ENCODE measurements at regions of chr12 and their contacts with region 1.

Region 1: DNA sequence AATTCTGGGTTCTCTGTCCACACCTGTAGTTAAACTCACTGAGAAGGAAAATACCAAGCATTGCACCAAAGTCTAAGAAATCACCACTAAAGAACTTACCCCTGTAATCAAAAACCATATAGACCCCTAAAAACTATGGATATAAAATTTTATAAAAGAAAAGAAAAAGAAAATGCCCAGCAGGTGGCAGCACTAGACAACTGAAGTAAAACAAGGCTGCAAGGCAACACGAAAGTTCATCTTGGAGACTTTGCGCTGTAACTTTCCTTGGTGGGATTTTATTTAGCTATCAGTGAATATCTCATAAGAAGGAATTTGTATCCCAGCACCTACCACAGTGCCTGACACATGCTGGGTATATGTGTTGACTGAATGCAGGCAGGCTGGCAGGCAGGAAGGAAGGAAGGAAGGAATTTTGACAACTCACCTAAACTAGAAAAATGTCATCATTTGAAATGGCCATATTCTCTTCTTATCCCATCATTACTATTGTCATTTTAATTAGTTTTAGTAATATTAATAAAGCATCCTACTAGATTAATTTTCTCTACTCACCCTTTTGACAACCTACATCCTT is 68.2 kb upstream of the ETV6 start:
- DNase-seq: peak; percentile 52
- H3K4me3 ChIP-seq: no peak overlapping the region
- H3K27ac ChIP-seq: no peak overlapping the region
- H3K4me1 ChIP-seq: peaks cover 24% of the 10 kb centered on the region
- H3K27me3 ChIP-seq: no peaks in the 10 kb centered on the region
- CTCF ChIP-seq: peak; percentile 27 to 48

Region 2: DNA sequence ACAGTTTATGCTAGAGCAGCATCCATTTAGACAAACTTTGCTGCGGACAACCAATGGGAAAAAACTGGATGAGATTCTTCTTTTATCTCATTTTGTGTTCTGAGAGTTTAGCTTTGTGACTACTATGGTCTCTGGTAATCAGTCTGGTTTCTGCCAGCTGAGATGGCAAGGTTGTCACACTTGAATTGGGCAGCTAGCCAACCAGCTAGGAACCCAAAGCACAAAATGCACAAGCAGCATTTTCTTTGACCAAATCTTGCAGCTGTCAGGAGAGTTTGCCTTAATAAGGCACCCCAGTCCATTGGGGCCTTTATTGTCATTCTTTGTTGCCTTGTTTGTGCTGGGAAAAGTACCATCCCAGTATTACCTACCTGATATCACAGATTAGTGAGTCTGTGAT is 34.2 kb after region 1 on chr12:
- CTCF ChIA-PET with region 1: no interaction called
- dilution Hi-C with region 1: no loop called
- in situ Hi-C with region 1: no loop called
- intact Hi-C with region 1: no loop called
- DNase-seq: no peak
- H3K4me3 ChIP-seq: no peak overlapping the region
- H3K27ac ChIP-seq: no peak overlapping the region
- H3K4me1 ChIP-seq: no peaks in the 10 kb centered on the region
- H3K27me3 ChIP-seq: no peaks in the 10 kb centered on the region
- CTCF ChIP-seq: no peak

Region 3: GRCh38 chr12:11746024-11746771 is 164.9 kb after region 1 on chr12:
- CTCF ChIA-PET with region 1: no interaction called
- dilution Hi-C with region 1: no loop called
- in situ Hi-C with region 1: no loop called
- intact Hi-C with region 1: loop called (anchors 5 kb)
- DNase-seq: peak; percentile 99
- H3K4me3 ChIP-seq: no peak overlapping the region
- H3K27ac ChIP-seq: peak overlapping the region; percentile 89
- H3K4me1 ChIP-seq: peaks cover 62% of the 10 kb centered on the region
- H3K27me3 ChIP-seq: no peaks in the 10 kb centered on the region
- CTCF ChIP-seq: no peak

Region 4: DNA sequence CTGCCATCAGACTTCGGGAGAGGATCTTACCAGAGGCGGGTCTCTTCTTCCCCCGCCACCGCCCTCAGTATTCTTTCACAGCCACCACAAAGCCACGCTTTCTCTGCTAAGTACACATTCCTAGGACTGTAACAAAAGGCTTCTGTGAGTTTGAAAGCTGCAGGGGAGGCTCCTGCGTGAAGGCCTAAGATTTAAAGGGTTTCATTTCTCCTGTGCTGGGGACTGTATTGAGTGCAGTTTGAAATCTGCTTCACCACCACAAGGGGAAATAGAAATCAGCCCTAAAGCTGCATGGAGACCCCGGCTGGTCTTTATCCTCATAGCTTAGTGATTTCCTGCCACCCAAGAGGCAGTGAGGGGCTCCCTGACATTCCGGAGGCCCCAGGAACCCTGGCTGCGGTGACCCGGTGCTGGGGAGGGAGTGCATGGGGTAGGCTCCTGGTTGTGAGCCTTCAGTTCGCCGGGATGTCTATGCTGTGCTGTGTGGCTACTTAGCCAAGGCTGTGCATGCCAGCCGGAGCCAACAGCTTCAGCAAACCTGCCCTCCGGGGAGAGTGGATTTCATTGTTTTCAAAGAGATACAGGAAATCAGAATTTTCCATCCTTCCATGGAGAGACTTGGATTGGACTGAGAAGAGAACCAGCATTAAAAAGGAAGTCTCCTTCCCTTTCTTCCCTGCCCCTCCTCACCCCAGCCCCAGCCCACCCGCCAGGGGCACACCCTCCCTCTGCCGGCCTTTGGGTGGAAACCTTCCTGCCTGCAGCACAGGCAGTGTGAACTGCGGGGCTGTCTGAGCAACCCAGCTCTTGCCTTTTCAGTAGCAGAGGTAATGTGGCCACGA is 231.5 kb after region 1 on chr12:
- CTCF ChIA-PET with region 1: no interaction called
- dilution Hi-C with region 1: no loop called
- in situ Hi-C with region 1: no loop called
- intact Hi-C with region 1: loop called (anchors 5 kb)
- DNase-seq: peak; percentile 36
- H3K4me3 ChIP-seq: peak overlapping the region in 2 of 3 experiments; percentile 18 to 32
- H3K27ac ChIP-seq: peak overlapping the region; percentile 26
- H3K4me1 ChIP-seq: peaks cover 28% of the 10 kb centered on the region
- H3K27me3 ChIP-seq: no peaks in the 10 kb centered on the region
- CTCF ChIP-seq: peak in 1 of 2 donors; percentile 20

Region 5: DNA sequence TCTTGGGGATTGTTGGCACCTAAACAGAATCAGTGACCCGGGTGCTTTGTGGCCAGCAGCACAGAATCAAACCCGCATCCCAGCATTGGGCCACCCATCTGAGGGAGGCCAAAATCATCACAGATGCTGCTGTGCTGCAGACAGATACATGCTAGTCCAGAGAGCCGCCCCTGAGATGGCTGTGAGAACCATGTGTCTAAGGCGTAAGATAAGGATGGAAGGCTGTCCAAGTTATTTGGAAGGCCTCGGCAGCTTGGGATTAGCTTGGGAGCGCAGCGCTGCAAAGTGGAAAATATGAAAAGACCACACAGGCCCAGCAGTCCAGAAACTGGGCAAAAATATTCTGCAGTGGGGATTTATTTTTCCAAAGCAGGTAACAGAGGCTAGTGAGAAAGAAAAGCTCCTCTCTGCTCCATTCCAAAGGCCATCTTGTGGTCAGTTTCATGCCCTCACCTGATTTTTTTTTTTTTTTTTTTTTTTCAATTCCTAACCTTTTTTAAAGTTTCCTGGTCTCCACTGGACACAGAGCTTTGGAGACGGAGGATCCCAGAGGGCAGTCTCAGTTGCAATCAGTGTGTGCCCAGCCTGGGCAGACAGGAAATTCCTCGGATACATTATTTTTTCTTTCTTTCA is 310.6 kb after region 1 on chr12:
- CTCF ChIA-PET with region 1: no interaction called
- dilution Hi-C with region 1: no loop called
- in situ Hi-C with region 1: no loop called
- intact Hi-C with region 1: loop called (anchors 5 kb)
- DNase-seq: no peak
- H3K4me3 ChIP-seq: no peak overlapping the region
- H3K27ac ChIP-seq: no peak overlapping the region
- H3K4me1 ChIP-seq: peaks cover 6% of the 10 kb centered on the region
- H3K27me3 ChIP-seq: no peaks in the 10 kb centered on the region
- CTCF ChIP-seq: peak; percentile 7 to 27

Region 6: GRCh38 chr12:12017798-12018197 is 436.5 kb after region 1 on chr12:
- CTCF ChIA-PET with region 1: no interaction called
- dilution Hi-C with region 1: no loop called
- in situ Hi-C with region 1: no loop called
- intact Hi-C with region 1: loop called (anchors 5 kb)
- DNase-seq: no peak
- H3K4me3 ChIP-seq: no peak overlapping the region
- H3K27ac ChIP-seq: peak overlapping the region; percentile 41
- H3K4me1 ChIP-seq: peaks cover 18% of the 10 kb centered on the region
- H3K27me3 ChIP-seq: no peaks in the 10 kb centered on the region
- CTCF ChIP-seq: peak in 1 of 2 donors; percentile 37

Region 7: DNA sequence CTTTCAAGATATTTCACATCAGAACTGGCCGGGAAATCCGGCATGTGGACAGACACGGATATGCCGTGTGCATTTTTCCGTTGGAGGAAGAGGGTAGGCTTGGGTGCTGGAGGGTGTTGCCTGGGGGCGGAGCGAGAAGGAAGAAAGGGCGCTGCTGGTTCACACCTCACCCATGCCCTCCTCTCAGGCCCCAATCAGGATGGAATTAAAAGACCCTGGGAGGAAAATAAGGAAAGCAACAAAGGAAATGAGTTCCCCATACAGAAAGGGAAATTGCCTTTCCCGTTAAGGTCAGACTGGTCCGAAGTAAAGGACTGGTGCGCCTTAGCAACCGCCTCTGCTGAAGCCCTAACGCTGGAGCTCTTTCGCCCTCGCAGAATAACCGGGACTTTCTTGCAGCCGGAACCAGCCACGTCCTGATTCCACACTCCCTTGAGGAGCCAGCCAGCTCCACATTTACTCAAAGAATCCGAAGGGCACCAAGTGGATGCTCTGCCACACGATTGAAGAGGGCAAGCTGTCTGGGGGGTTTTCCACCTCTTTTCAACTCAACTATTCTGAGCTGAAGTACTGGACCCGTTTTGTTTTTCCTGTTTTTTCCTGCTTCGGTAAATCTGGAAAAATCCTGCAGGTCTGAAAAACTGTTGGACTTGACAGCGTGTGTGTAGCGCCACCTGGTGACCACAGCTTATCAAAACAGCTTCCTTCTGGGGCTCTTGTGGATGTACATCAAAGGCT is 451.8 kb after region 1 on chr12:
- CTCF ChIA-PET with region 1: interaction called, 4 read pairs
- dilution Hi-C with region 1: loop called (anchors 25 kb)
- in situ Hi-C with region 1: loop called (anchors 5 to 10 kb)
- intact Hi-C with region 1: loop called (anchors 1 kb)
- DNase-seq: peak; percentile 72
- H3K4me3 ChIP-seq: peak overlapping the region; percentile 11 to 33 (median 26)
- H3K27ac ChIP-seq: no peak overlapping the region
- H3K4me1 ChIP-seq: no peaks in the 10 kb centered on the region
- H3K27me3 ChIP-seq: no peaks in the 10 kb centered on the region
- CTCF ChIP-seq: peak; percentile 79 to 90

Region 8: DNA sequence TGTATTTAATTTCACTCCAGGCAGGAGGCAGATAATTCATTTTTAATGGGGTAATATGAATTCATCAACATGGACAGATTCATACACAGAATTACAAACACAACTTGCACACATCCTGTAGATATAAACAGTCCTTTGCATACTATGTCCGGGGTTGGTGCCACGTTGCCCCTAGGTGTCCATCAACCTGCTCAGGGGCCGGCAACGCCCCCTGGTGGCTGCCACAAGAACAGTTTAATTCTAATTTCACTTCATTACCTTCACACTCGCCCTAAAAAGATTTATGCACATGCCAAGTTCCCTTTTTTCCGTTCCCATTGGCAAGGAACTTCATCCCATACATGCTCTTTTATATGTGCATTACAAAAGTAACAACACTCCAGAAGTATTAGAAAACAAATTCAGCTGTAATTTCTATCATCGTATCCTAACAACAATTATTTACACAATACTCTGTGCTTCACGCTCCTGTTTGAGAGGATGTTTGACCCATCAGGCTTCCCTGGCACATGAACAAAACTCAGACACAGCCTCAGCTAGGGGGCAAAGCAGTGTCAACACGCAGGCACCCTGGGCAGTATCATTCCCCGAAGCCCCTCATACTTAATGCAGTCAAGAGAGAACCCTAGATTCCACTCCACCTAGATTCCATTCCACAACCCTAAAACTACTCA is 753.2 kb after region 1 on chr12:
- CTCF ChIA-PET with region 1: no interaction called
- dilution Hi-C with region 1: loop called (anchors 25 kb)
- in situ Hi-C with region 1: loop called in 1 of 2 experiments (anchors 25 kb)
- intact Hi-C with region 1: loop called (anchors 10 kb)
- DNase-seq: peak; percentile 25
- H3K4me3 ChIP-seq: no peak overlapping the region
- H3K27ac ChIP-seq: no peak overlapping the region
- H3K4me1 ChIP-seq: peaks cover 26% of the 10 kb centered on the region
- H3K27me3 ChIP-seq: no peaks in the 10 kb centered on the region
- CTCF ChIP-seq: peak; percentile 80 to 81